ENCODE measurements at regions of chr17 and their contacts with region 1.

Region 1: GRCh38 chr17:63621766-63622519 is at the start of gene MAP3K3:
- DNase-seq: peak; percentile 91 to 100 (median 95)
- ATAC-seq: peak; percentile 90
- H3K4me3 ChIP-seq: peak within 1 kb of the TSS; percentile 72
- H3K4me3 Mint-ChIP-seq: peak within 1 kb of the TSS; percentile 99
- H3K27ac ChIP-seq: peak within 1 kb of the TSS; percentile 51 to 69
- H3K27ac Mint-ChIP-seq: peak within 1 kb of the TSS; percentile 88
- H3K4me1 ChIP-seq: peaks cover 25% of the 10 kb centered on the region
- H3K4me1 Mint-ChIP-seq: peaks cover 44% of the 10 kb centered on the region
- H3K27me3 ChIP-seq: no peaks in the 10 kb centered on the region
- H3K27me3 Mint-ChIP-seq: no peaks in the 10 kb centered on the region
- CTCF ChIP-seq: no peak
- total RNA-seq, gene MAP3K3: 75.8 to 78.1 TPM

Region 2: DNA sequence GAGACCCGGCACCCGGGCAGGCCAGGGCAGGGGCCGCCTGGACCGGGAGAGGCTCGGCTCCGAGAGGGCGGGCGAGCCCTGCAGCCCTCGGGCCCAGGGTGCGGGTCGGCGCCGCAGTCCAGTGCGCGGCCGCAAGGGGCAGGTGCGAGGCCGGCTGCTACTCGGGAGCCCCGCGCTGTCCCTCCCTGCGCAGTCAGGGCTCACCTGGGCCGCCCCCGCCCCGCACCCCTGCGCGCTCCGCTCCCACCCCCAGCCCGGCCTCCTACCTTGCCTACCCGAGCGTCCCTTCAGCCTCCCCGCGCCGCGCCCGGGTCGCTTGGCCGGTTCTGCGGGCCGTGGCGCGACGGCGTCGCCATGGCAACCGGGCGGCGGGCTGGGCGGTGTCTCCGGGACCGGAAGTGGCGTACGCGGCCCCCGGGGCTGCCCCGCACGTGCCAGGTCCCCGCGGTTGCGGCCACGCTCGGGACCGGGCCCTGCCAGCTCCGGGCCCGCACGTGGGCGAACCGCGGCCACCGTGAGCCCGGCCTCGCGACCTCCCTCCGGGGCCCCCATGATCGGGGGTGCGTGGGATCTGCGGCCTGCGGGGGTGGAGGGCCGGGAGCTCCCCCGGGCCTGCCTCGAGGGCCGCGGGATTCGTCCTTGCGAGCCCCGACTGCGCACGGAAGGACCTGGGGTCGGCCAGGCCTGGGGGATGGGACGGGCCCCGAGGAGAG is 175.8 kb before region 1 on chr17 and contains the start of gene CYB561:
- CTCF ChIA-PET with region 1: interaction called, 3 read pairs
- POLR2A ChIA-PET with region 1: interaction called, 17 read pairs
- intact Hi-C with region 1: no loop called
- DNase-seq: peak; percentile 33 to 90 (median 64)
- ATAC-seq: peak; percentile 71
- H3K4me3 ChIP-seq: peak within 1 kb of the TSS; percentile 71
- H3K4me3 Mint-ChIP-seq: peak within 1 kb of the TSS; percentile 90
- H3K27ac ChIP-seq: peak within 1 kb of the TSS; percentile 82 to 96
- H3K27ac Mint-ChIP-seq: peak within 1 kb of the TSS; percentile 85
- H3K4me1 ChIP-seq: peaks cover 52% of the 10 kb centered on the region
- H3K4me1 Mint-ChIP-seq: peaks cover 35% of the 10 kb centered on the region
- H3K27me3 ChIP-seq: no peaks in the 10 kb centered on the region
- H3K27me3 Mint-ChIP-seq: peaks cover 6% of the 10 kb centered on the region
- CTCF ChIP-seq: peak; percentile 29
- total RNA-seq, gene CYB561: 17.4 to 18.1 TPM

Region 3: DNA sequence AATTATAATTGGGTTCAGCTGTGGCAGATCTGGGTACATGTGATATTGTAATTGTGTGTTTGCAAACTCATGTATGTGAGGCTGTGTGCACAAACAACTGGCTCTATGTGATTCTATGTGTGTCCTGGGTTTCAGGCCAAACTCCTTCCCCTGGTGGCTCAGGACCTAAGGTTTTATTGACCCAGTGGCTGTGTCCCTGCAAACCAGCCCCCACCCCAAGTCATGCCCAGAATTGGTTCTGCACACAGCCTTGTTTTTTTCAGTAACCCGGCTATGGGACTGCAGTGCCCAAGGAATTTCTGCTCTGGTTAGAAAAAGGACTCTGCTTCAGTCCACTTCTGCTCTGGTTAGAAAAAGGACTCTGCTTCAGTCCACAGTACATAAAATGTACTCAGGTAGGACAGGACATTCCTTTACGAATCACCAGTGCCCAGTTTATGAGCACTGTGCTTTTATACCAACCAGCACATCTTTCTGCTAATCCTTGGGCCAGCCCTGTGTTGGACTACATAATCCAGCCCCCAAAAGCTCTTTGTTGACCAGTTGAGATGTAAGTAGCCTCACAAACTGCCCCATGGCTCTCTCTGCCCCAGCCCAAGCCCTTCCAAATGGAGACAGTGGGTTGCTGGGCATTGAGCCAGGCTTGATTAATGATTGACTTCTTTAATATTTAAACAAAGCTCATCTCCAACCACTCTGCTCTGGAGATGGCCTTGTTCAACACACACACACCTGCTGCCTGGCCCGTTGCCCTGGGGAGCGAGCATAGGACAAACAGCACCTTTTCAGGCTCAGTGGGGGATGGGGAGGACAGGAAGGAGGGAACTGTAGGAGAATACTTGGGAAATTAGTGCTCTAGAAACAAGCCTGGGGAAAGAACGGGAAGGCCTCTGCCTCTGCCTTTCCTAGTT is 101.7 kb before region 1 on chr17:
- CTCF ChIA-PET with region 1: no interaction called
- POLR2A ChIA-PET with region 1: no interaction called
- intact Hi-C with region 1: no loop called
- DNase-seq: no peak
- ATAC-seq: no peak
- H3K4me3 ChIP-seq: no peak overlapping the region
- H3K4me3 Mint-ChIP-seq: no peak overlapping the region
- H3K27ac ChIP-seq: no peak overlapping the region
- H3K27ac Mint-ChIP-seq: no peak overlapping the region
- H3K4me1 ChIP-seq: peaks cover 5% of the 10 kb centered on the region
- H3K4me1 Mint-ChIP-seq: no peaks in the 10 kb centered on the region
- H3K27me3 ChIP-seq: peaks cover 8 to 20% of the 10 kb centered on the region in 2 experiments
- H3K27me3 Mint-ChIP-seq: peaks cover 32% of the 10 kb centered on the region
- CTCF ChIP-seq: no peak

Region 4: GRCh38 chr17:63611354-63611753 is 10.6 kb before region 1 on chr17:
- CTCF ChIA-PET with region 1: interaction called, 13 read pairs
- POLR2A ChIA-PET with region 1: interaction called, 40 read pairs
- intact Hi-C with region 1: no loop called
- DNase-seq: peak in 5 of 14 experiments; percentile 5 to 62 (median 29)
- ATAC-seq: peak; percentile 27
- H3K4me3 ChIP-seq: no peak overlapping the region
- H3K4me3 Mint-ChIP-seq: peak overlapping the region; percentile 42
- H3K27ac ChIP-seq: peak overlapping the region in 1 of 2 donors; percentile 70
- H3K27ac Mint-ChIP-seq: peak overlapping the region; percentile 88
- H3K4me1 ChIP-seq: peaks cover 30% of the 10 kb centered on the region
- H3K4me1 Mint-ChIP-seq: peaks cover 31% of the 10 kb centered on the region
- H3K27me3 ChIP-seq: no peaks in the 10 kb centered on the region
- H3K27me3 Mint-ChIP-seq: no peaks in the 10 kb centered on the region
- CTCF ChIP-seq: no peak

Region 5: DNA sequence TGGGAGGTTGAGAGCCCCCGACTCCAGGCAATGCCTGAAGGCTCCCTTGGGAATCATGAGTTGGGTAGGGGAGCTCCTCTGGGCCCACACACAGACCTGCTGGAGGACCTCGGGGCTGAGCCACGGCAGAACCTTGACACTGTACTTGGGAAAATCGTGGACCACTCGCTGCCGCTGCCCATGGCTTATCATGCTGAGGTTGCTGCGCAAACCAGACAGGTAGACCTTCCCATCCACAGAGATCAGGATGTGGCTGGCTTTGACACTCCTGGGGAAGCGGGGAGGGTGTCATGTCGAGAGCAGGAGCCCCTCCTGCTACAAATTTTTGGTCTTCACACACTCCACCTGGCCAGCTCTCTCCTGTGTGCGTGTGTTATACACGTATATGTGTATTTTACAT is 85.2 kb after region 1 on chr17:
- CTCF ChIA-PET with region 1: interaction called, 6 read pairs
- POLR2A ChIA-PET with region 1: interaction called, 36 read pairs
- intact Hi-C with region 1: loop called in 1 of 2 experiments (anchors 5 kb)
- DNase-seq: peak in 6 of 14 experiments; percentile 28 to 79 (median 54)
- ATAC-seq: peak; percentile 57
- H3K4me3 ChIP-seq: peak overlapping the region; percentile 39
- H3K4me3 Mint-ChIP-seq: peak overlapping the region; percentile 75
- H3K27ac ChIP-seq: peak overlapping the region; percentile 69 to 70
- H3K27ac Mint-ChIP-seq: peak overlapping the region; percentile 100
- H3K4me1 ChIP-seq: peaks cover 86% of the 10 kb centered on the region
- H3K4me1 Mint-ChIP-seq: peaks cover 83% of the 10 kb centered on the region
- H3K27me3 ChIP-seq: no peaks in the 10 kb centered on the region
- H3K27me3 Mint-ChIP-seq: no peaks in the 10 kb centered on the region
- CTCF ChIP-seq: no peak

Region 6: DNA sequence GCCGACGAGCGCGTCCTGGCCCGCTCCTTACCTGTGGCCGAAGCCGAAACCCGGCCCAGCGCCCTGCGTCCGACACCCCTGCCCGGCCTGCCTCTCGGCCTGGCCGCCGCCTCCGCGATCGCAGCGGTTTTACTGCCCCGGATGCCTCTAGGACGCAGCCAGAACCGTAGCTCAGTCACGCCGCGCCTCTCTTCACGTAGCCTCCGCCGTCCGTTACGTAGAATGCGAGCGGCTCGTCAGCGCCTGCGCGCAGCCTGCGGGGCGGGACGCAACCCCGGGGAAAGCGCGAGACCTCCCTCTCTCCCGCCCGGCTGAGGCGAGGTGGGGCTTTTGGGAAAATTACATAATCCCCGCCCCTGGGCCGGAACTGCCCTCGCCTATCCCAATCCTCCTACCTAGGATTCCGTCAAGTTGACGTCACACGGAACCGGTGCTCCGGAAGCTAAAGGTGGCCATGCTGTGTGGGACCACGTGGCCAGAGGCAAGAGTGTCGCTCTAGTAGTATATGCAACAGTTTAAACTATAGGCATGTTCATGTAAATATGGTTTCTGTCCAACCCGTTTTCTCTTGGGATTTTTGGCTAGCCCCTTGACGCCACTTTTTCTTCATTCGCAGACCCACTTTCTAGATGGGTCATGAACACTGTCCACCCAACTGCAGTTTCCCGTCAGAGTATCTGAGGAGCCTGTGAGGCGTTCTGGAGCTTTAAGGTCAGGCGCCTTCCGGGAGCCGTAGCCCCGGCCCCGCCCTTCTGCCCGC is 151.6 kb after region 1 on chr17 and contains the start of gene CCDC47:
- CTCF ChIA-PET with region 1: no interaction called
- POLR2A ChIA-PET with region 1: interaction called, 21 read pairs
- intact Hi-C with region 1: loop called in 1 of 2 experiments (anchors 5 kb)
- DNase-seq: peak; percentile 94 to 100 (median 98)
- ATAC-seq: peak; percentile 80
- H3K4me3 ChIP-seq: peak within 1 kb of the TSS; percentile 67
- H3K4me3 Mint-ChIP-seq: peak within 1 kb of the TSS; percentile 99
- H3K27ac ChIP-seq: peak within 1 kb of the TSS; percentile 94 to 98
- H3K27ac Mint-ChIP-seq: peak within 1 kb of the TSS; percentile 97
- H3K4me1 ChIP-seq: peaks cover 58% of the 10 kb centered on the region
- H3K4me1 Mint-ChIP-seq: peaks cover 71% of the 10 kb centered on the region
- H3K27me3 ChIP-seq: no peaks in the 10 kb centered on the region
- H3K27me3 Mint-ChIP-seq: no peaks in the 10 kb centered on the region
- CTCF ChIP-seq: no peak
- total RNA-seq, gene CCDC47: 31.0 to 31.3 TPM

Region 7: DNA sequence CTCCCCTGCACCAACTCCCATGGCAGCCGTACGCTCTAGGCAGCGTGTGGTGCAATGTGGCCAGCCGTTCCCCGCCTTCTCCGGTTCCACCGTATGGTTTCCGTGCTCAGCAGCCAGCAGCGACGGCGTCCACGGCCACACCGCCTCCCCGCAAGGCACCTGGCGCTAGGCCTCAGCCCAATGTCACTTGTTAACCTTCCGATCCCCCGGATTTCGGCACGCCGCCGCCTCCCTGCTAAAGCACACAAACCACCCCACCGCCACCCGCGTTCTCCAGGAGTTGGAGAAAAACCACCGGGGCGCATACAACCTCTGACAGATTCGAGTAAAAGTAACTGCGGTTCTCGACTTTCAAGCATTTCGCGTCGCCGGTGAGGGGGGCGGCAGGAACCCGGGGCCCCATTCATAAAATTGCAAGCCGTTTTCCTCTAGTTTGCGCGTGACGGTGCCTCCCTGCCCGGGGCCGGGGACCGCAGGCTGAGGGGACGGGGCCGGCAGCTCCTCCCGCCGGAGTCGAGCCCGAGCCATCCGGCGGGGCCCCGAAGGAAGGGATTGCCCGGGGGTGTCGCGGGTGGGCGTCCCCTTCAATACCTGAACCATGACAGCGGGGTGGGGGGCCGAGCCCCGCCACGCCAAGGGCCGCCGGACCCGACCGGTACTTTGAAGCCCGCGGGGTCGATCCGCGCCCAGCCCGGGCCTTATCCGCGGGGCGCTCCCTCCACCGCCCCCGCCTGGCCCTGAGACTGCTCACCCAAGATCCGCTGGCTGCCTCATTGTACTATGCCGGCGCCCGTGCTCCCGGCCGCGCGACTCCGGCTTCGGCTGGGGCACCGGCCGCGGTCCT is 640.7 kb after region 1 on chr17 and contains the start of gene TEX2:
- CTCF ChIA-PET with region 1: no interaction called
- POLR2A ChIA-PET with region 1: no interaction called
- intact Hi-C with region 1: loop called in 1 of 2 experiments (anchors 5 kb)
- DNase-seq: peak; percentile 39 to 87 (median 60)
- ATAC-seq: peak; percentile 47
- H3K4me3 ChIP-seq: peak within 1 kb of the TSS; percentile 70
- H3K4me3 Mint-ChIP-seq: peak within 1 kb of the TSS; percentile 92
- H3K27ac ChIP-seq: peak within 1 kb of the TSS; percentile 70 to 86
- H3K27ac Mint-ChIP-seq: peak within 1 kb of the TSS; percentile 95
- H3K4me1 ChIP-seq: peaks cover 28% of the 10 kb centered on the region
- H3K4me1 Mint-ChIP-seq: peaks cover 46% of the 10 kb centered on the region
- H3K27me3 ChIP-seq: no peaks in the 10 kb centered on the region
- H3K27me3 Mint-ChIP-seq: peaks cover 6% of the 10 kb centered on the region
- CTCF ChIP-seq: no peak
- total RNA-seq, gene TEX2: 8.6 to 8.9 TPM